ENCODE measurements at regions of chr6 and their contacts with region 1.

Region 1: DNA sequence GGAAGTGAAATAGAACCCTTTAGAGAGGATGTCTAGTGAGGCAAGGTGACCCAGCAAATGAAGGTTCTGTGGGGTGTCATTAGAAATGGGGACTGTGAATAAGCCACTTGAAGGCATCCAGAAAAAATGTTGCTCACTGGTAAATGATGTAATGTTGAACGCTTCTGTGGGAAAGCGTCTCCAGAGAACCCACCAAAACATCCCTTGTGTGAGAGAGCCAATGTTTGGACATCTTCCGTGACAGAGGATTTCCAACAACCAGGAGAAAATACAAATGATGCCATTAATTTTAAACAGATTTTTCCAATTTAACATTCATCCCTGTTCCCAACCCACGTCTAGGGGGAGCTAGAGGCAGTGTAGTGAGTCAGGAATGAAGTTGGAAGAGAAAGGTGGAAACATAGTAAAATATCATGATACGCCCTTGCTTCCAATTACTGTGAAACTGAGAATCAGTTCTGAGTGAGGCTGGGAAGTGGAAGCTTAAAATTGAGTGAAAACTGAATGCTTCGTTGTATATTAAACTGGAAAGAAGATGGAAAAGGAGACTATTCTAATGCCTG is 584.2 kb downstream of the CD109 start:
- DNase-seq: no peak
- CTCF ChIP-seq: no peak

Region 2: DNA sequence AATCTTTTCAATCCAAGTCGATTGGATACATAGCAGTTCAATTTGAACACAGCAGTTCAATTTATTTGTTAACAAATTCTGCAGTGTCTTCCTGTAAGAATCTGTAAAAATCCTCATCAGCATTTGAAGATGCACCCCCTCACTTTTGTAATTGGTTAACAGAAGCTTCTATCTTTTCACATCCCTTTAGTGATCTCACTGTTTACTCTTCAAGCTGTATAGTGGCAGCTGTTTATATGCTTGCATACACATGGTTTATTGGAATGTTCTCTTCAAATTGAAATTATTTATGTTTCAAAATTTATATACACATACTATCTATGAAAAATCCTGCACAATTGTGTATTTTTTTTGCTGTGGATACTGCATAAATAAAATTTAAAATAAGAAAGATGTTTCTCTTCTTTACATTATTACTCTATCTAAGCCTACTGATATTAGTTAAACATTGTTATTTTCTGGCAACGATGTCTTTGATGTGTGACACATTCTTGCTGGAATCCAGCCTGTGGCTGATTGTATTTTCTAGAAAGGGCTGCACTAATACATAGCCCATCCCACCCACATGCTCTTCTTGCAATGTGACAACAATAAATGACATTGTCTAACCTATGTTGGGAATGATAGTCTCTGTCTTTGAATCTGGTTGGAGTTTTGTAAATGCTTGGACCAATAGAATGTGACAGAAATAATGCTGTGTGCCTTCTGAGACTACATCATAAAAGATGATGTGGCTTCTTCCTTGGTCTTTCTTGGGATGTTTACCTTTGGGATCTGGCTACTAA is 11.2 kb before region 1 on chr6:
- CTCF ChIA-PET with region 1: interaction called, 11 read pairs
- POLR2A ChIA-PET with region 1: no interaction called
- DNase-seq: no peak
- CTCF ChIP-seq: no peak

Measured in GM10248 (cell line).